Dorsolateral prefrontal cortex (tissue), 120 donors: ENCODE measurements at regions of chr7 and their contacts with region 1.

Region 1: GRCh38 chr7:74289018-74289658 is at the start of gene CLIP2:
- DNase-seq: peak; percentile 67 to 90 (median 84)
- H3K4me3 ChIP-seq: peak within 1 kb of the TSS; percentile 67 to 97 (median 90)
- H3K27ac ChIP-seq: peak within 1 kb of the TSS; percentile 76 to 97 (median 92)
- H3K27me3 ChIP-seq: no peaks in the 10 kb centered on the region
- CTCF ChIP-seq: peak in 5 of 56 donors; percentile 5 to 19 (median 7)
- total RNA-seq, gene CLIP2: 111 to 263 (median 148) TPM

Region 2: DNA sequence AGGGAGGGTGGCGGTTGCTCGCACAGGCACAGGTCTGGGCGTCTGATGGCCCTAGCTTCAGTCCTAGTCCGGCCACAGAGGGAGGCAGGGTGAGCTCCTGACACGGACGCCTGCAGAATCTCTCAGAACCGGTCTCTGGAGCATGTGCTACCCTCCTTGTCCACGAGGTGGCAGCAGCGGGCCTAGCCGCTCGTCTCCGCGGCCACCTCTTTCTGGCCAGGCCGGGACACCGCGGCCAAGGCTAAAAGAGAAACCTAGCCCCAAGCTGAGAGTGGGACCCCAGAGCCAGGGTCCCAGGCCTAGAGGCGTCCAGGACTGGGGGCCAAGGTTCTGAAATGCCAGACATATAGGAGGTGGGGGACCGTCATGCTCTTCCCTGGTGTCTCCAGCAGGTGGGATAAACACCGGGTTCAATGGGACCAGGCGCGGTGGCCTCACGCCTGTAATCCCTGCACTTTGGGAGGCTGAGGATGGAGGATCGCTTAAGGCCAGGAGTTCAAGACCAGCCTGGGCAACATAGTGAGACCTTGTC is 82.5 kb before region 1 on chr7:
- intact Hi-C with region 1: loop called in 1 of 2 experiments (anchors 5 kb)
- DNase-seq: peak; percentile 80 to 91 (median 86)
- H3K4me3 ChIP-seq: peak overlapping the region in 57 of 59 donors; percentile 14 to 62 (median 37)
- H3K27ac ChIP-seq: peak overlapping the region in 6 of 59 donors; percentile 6 to 76 (median 48)
- H3K27me3 ChIP-seq: no peaks in the 10 kb centered on the region
- CTCF ChIP-seq: peak; percentile 85 to 99 (median 98)

Region 3: DNA sequence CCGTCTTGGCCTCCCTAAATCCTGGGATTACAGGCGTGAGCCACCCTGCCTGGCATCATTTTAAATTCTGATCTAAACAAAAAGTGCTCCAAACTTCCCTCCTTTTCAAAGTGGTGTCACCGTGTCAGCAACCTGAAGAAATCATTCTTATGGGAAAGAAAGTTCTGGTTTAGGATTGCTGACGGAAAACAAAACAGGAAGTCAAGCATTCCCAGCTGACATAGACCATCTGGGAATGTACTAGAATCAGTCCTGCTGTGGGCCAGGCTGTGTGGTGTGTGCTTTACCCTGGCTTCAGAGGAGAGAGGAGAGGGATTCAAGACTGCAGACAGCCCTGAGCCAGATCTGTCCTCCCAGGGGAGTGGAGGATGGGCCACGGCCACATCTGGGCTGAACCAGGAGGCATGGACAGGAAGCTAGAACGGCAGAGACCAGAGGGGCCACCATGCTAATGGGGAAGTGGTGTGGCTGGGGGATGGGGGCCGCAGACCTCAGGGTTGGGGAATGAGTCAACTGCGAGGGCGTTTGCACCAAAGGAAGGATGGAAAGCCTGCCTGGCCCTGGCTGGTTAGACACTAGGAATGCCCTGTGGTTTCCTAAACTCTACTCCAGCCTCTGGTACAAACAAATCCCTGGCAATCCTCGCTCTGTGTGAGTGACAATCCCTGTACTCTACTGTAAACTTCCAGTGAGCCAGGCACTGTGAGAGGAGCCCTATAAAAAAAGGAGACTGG is 16.7 kb before region 1 on chr7:
- intact Hi-C with region 1: loop called (anchors 1 to 2 kb)
- DNase-seq: peak in 4 of 10 donors; percentile 28 to 52 (median 42)
- H3K4me3 ChIP-seq: no peak overlapping the region
- H3K27ac ChIP-seq: peak overlapping the region in 57 of 59 donors; percentile 0 to 88 (median 77)
- H3K27me3 ChIP-seq: no peaks in the 10 kb centered on the region
- CTCF ChIP-seq: no peak

Region 4: DNA sequence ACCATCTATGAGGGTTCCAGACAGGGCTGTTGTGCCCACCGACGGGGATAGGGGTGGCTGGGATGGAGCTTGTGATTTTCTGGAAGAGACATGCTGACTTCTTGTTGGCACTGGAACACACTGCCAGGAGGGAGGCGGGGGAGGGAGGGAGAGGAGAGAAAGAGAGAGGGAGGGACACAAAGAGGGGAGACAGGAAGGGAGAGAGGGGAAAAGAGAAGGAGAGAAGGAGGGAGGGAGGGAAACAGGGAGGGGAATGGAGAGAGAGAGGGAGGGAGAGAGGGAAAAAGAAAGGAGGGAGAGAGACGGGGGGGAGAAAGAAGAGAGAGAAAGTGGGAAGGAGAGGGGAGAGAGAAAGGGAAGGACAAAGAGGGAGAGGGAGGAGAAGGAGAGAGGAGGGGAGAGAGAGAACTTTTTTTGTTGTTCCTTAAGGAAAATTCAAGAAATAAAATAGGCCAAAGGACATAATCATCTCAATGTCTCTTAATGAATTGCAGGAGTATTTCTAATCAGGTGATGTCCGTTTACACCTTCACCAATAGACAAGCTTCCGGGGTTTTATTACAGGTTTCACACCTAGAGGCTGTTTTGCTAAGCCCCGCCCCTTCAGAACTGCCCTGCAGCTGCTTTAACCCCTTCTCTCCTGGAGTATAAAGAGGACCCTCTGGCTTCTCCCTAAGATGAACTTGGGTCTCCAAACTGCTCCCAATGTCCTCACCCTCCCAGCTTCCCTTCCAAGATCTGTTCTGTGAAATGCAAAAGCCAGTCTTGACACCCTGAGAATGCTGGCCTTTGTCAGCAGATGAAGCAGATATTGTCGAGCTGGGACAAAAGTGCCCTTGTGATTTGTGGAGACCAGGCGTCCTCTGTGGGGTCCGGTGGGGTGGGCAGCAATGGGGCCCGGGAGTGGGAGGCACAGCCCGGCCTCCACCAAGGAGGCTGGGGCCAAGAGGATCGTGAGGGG is 82.5 kb after region 1 on chr7:
- intact Hi-C with region 1: loop called (anchors 1 to 5 kb)
- DNase-seq: peak in 9 of 10 donors; percentile 39 to 85 (median 68)
- H3K4me3 ChIP-seq: peak overlapping the region in 21 of 59 donors; percentile 0 to 51 (median 32)
- H3K27ac ChIP-seq: peak overlapping the region; percentile 65 to 97 (median 93)
- H3K27me3 ChIP-seq: no peaks in the 10 kb centered on the region
- CTCF ChIP-seq: peak in 1 of 56 donors; percentile 10